BJ (cell line): ENCODE measurements at regions of chr15 and their contacts with region 1.

Region 1: DNA sequence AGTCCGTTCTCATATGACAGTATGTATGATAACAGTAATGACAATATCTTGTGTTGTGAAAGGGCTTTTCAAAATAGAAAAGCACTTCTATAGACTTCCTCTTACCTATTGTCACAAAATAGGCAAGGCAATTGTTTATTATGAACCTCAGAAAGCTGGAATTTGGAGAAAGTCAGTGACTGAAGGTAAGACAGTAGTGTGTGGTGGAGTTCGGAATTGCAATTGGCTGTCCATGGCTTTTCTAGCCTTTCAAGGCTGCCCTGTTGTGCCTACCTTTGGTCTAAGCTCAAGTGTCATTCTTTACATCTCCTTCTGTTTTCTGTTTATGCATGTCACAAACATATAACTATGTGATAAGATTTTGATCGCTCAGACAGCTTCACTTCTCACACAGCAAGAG is 219.3 kb upstream of the NR2E3 start:
- DNase-seq: no peak
- H3K4me3 ChIP-seq: no peak overlapping the region
- H3K27me3 ChIP-seq: no peaks in the 10 kb centered on the region
- CTCF ChIP-seq: no peak

Region 2: DNA sequence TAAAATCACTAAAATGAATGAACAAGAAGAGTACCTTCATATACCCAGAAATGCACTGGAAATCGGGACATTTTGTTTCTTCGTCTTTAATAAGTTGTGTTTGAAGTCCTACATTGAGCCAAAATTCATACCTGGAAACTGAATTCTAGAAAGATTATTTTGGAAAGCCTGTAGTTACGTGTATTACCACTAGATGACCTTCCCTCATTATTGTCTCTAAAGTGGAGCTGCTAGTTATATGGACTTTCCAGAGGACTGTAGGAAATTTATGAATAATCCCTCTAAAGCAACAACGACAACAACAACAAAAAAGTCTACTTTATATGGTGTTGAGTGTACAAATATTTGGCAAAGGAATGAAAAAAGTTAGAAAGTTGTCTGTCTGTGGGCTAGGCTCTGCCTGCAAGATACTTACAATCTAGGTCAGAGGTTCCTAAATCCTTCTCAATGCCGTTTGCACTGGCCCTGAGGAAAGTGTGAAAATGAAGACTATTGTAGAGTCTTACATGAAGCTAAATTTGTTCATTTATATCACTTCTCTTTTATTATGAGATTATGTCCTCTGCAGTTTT is 15.5 kb before region 1 on chr15:
- CTCF ChIA-PET with region 1: interaction called, 39 read pairs
- POLR2A ChIA-PET with region 1: no interaction called
- DNase-seq: no peak
- H3K4me3 ChIP-seq: no peak overlapping the region
- H3K27me3 ChIP-seq: no peaks in the 10 kb centered on the region
- CTCF ChIP-seq: peak; percentile 62